ENCODE measurements at regions of chr11 and their contacts with region 1.

Region 1: GRCh38 chr11:102614485-102614884 is 10.6 kb downstream of the MMP20 start:
- DNase-seq: no peak
- H3K4me3 ChIP-seq: no peak overlapping the region
- H3K27ac ChIP-seq: no peak overlapping the region
- H3K4me1 ChIP-seq: no peaks in the 10 kb centered on the region
- H3K27me3 ChIP-seq: no peaks in the 10 kb centered on the region
- CTCF ChIP-seq: peak; percentile 50; the same call in 1 of the 2 replicates

Region 2: DNA sequence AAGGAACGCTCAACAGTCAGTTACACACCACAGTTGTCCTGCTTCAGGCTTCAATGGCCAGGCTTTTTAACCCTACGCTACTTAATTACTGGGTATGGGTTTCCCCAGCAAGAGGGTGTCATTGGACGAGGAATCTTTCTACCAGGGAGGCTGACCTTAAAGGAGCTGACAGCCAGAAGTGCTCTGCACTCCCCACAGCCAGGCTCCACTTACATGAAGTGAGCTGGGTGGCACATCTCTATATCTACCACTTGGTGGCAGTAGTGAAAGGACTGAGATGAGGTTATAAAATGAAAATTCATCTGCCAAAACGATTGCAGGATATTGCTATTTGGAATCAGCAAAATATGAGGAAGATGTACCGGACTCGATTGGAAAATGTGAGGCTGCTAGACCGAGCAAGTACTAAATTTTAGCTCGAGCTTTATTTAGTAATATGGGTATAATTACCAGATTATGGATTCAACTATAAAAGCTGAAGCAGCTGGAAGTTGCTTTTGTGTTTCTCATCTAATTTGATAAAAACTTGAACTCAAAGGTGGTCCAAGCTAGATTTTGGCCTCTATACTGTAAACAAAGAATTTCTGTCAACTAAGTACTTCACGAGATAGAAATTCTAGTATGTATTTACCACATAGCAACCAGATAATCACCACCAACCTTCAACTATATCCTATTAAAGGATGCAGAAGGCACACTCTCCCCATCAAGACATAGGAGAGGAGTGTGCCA is 753.6 kb before region 1 on chr11:
- CTCF ChIA-PET with region 1: interaction called, 3 read pairs
- POLR2A ChIA-PET with region 1: no interaction called
- intact Hi-C with region 1: loop called (anchors 2 kb)
- DNase-seq: peak; percentile 30 to 68
- H3K4me3 ChIP-seq: no peak overlapping the region
- H3K27ac ChIP-seq: no peak overlapping the region
- H3K4me1 ChIP-seq: peaks cover 20% of the 10 kb centered on the region
- H3K27me3 ChIP-seq: no peaks in the 10 kb centered on the region
- CTCF ChIP-seq: peak; percentile 89

Region 3: DNA sequence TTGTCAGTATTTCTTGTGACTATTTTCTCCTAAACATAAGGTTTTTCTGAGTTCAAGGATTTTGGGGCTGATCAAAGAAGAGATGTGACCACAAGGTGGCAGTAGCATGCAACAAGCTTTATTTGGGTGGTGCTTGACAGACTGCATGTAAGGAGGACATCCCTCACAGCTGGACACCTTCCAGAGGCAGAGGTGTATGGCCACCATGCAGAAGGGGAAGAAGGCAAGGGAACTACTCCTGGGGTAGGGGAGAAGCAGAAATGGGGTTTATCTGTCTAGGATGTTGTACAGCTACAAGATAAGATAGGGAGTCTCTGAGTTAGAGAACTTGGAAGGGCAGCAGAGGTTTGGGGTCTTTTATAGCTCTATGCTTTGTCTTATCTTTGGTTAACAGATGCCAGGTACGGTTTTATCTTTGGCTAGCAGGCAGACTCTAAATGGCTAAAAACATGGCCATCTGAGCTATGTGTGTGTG is 272.6 kb before region 1 on chr11:
- CTCF ChIA-PET with region 1: interaction called, 11 read pairs
- POLR2A ChIA-PET with region 1: interaction called, 4 read pairs
- intact Hi-C with region 1: loop called (anchors 1 kb)
- DNase-seq: peak; percentile 58 to 68
- H3K4me3 ChIP-seq: no peak overlapping the region
- H3K27ac ChIP-seq: no peak overlapping the region
- H3K4me1 ChIP-seq: peaks cover 17% of the 10 kb centered on the region
- H3K27me3 ChIP-seq: no peaks in the 10 kb centered on the region
- CTCF ChIP-seq: peak; percentile 92

Region 4: GRCh38 chr11:102390667-102391465 is 223.6 kb before region 1 on chr11:
- CTCF ChIA-PET with region 1: no interaction called
- POLR2A ChIA-PET with region 1: interaction called, 4 read pairs
- intact Hi-C with region 1: loop called (anchors 1 kb)
- DNase-seq: peak; percentile 45 to 55
- H3K4me3 ChIP-seq: no peak overlapping the region
- H3K27ac ChIP-seq: no peak overlapping the region
- H3K4me1 ChIP-seq: no peaks in the 10 kb centered on the region
- H3K27me3 ChIP-seq: no peaks in the 10 kb centered on the region
- CTCF ChIP-seq: peak; percentile 96

Region 5: DNA sequence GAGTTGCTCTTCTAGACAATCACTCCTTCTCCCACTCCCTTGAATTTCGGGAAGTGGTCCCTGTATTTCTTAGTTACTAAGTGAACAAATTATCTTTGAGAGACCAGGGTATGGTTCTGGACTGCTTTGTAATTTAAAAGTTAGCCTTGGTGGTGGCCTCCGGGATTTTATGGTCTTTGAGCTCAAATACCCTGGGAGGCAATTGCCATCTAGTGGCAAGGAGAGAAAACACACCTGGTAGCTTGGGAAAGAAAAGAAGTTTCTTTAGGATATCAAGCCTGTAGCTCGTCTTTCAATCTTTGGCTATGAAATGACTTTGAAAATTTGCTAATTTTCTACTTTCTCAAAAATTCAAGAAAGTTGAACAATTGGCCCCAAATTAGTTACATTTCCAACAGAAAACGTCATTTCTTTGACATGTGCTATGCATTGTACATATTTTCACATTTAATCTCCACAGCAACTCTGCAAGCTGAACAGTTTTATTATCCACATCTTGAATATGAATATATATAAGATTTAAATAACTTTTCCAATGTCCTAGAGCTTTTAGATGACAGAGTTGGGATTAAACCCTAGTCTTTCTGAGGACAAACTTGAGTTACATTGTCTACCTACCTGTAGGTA is 52.0 kb after region 1 on chr11:
- CTCF ChIA-PET with region 1: interaction called, 8 read pairs
- POLR2A ChIA-PET with region 1: no interaction called
- intact Hi-C with region 1: loop called (anchors 2 kb)
- DNase-seq: peak; percentile 22 to 46
- H3K4me3 ChIP-seq: no peak overlapping the region
- H3K27ac ChIP-seq: no peak overlapping the region
- H3K4me1 ChIP-seq: no peaks in the 10 kb centered on the region
- H3K27me3 ChIP-seq: no peaks in the 10 kb centered on the region
- CTCF ChIP-seq: peak; percentile 96